Aorta (tissue), 5 donors: ENCODE measurements at regions of chr4 and their contacts with region 1.

Region 1: GRCh38 chr4:74483290-74483911 is 38.5 kb downstream of the AREG start:
- DNase-seq: no peak
- ATAC-seq: no peak
- H3K4me3 ChIP-seq: no peak overlapping the region
- H3K27ac ChIP-seq: no peak overlapping the region
- H3K4me1 ChIP-seq: no peaks in the 10 kb centered on the region
- H3K27me3 ChIP-seq: no peaks in the 10 kb centered on the region

Region 2: GRCh38 chr4:73311428-73311827 is 1172.0 kb before region 1 on chr4:
- intact Hi-C with region 1: loop called in 1 of 2 experiments (anchors 5 kb)
- DNase-seq: no peak
- ATAC-seq: no peak
- H3K4me3 ChIP-seq: no peak overlapping the region
- H3K27ac ChIP-seq: no peak overlapping the region
- H3K4me1 ChIP-seq: no peaks in the 10 kb centered on the region
- H3K27me3 ChIP-seq: no peaks in the 10 kb centered on the region